AG04450 (cell line): ENCODE measurements at regions of chr9 and their contacts with region 1.

Region 1: DNA sequence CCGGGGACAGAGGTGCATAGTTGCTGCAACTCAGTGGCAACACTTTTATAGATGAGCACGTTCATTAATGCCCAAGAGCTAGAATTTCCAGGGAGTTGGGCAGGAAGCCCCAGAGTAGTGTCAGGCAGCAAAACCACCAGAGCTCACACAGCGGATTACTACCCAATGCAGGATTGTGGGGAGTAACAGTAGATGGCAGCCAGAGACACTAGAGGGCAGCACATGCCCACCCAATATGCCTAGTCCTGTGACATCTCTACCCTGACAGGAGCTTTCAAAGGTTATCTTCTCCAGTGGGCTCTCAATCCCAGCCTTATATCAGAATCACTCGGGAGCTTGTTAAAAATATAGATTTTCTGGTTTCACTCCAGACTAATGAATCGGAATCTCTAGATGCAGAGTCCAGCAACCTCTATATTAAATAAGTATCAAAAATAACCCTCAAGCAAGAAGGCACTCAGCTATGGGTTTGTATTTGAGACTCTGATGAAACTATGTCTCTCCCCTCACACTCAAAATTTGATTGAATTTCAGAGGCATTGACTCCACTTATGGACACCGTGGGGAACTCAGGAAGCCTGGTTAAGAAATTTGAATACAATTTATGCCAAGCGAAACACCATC is 58.4 kb upstream of the PHF24 start:
- DNase-seq: peak; percentile 33
- H3K4me3 ChIP-seq: no peak overlapping the region
- H3K27ac ChIP-seq: no peak overlapping the region
- H3K27me3 ChIP-seq: peaks cover 17% of the 10 kb centered on the region
- CTCF ChIP-seq: peak; percentile 91

Region 2: DNA sequence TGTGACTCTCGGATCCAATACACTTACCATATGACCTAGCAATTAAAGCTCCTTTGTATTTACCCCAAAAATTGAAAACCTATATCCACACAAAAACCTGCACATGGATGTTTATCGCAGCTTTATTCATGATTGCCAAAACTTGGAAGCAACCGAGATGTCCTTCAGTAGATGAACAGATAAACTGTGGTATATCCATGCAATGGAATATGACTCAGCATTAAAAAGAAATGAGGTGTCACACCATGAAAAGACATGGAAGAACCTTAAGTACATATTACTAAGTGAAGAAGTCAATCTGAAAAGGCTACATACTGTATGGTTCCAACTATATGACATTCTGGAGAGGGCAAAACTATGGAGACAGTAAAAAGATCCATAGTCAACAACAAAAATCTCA is 23.6 kb before region 1 on chr9:
- CTCF ChIA-PET with region 1: no interaction called
- POLR2A ChIA-PET with region 1: no interaction called
- DNase-seq: no peak
- H3K4me3 ChIP-seq: no peak overlapping the region
- H3K27ac ChIP-seq: no peak overlapping the region
- H3K27me3 ChIP-seq: no peaks in the 10 kb centered on the region
- CTCF ChIP-seq: no peak

Region 3: GRCh38 chr9:34989003-34989945 is 89.6 kb after region 1 on chr9 and contains the start of gene DNAJB5:
- CTCF ChIA-PET with region 1: interaction called, 71 read pairs
- POLR2A ChIA-PET with region 1: no interaction called
- DNase-seq: peak; percentile 99
- H3K4me3 ChIP-seq: peak within 1 kb of the TSS; percentile 87
- H3K27ac ChIP-seq: peak within 1 kb of the TSS; percentile 70
- H3K27me3 ChIP-seq: no peaks in the 10 kb centered on the region
- CTCF ChIP-seq: no peak
- polyA plus RNA-seq, gene DNAJB5: 5.1 and 9.5 TPM in 2 replicates

Region 4: GRCh38 chr9:35026671-35027070 is 127.0 kb after region 1 on chr9:
- CTCF ChIA-PET with region 1: interaction called, 13 read pairs
- POLR2A ChIA-PET with region 1: no interaction called
- DNase-seq: no peak
- H3K4me3 ChIP-seq: no peak overlapping the region
- H3K27ac ChIP-seq: peak overlapping the region; percentile 59
- H3K27me3 ChIP-seq: no peaks in the 10 kb centered on the region
- CTCF ChIP-seq: no peak

Region 5: GRCh38 chr9:35042081-35042604 is 142.5 kb after region 1 on chr9:
- CTCF ChIA-PET with region 1: interaction called, 14 read pairs
- POLR2A ChIA-PET with region 1: no interaction called
- DNase-seq: no peak
- H3K4me3 ChIP-seq: no peak overlapping the region
- H3K27ac ChIP-seq: no peak overlapping the region
- H3K27me3 ChIP-seq: no peaks in the 10 kb centered on the region
- CTCF ChIP-seq: no peak

Region 6: DNA sequence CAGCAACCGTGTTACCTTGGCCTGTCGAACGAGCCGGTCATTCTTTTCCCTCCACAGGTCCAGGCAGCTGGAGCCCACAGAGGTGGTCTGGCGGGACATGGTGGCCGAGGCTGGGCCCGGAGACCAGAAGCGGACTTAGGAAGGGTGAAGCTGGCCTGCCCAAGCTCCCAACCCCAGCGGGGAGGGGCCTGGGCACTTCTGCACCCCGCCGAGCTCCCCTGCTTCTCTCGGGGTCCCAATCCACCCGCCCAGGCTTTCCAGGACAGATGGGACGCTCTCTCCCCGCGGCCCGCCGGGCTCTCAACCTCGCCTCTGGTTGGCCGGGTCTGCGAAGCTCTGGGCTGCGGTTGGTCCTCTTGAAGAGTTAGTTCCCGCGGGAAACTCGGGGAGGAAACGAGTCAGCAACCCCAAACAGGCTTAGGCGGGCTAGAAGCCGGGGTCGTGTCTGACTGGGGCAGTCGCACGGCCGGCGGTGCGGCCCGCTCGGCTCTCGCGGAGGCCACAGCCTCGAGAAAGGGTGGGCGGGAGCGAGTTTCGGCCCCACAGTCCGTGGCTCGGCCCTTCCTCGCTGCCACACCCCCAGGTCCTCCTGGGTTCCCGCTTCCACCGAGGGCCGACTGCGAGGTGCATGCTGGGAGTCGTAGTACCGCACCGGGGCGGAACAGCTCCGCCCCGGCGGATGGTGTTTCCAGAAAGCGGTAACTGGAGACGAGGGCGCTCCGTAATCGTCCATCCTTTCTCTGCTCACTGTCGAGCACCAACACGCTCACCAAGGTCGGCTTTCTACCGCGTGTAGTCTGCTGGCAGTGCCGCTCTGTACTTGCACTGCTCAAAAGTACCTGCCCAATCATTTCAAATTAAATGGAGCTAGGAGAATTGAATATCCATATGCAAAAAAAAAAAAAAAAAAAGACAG is 180.0 kb after region 1 on chr9 and contains the start of gene FANCG:
- CTCF ChIA-PET with region 1: interaction called, 11 read pairs
- POLR2A ChIA-PET with region 1: no interaction called
- DNase-seq: peak; percentile 69
- H3K4me3 ChIP-seq: peak within 1 kb of the TSS; percentile 81
- H3K27ac ChIP-seq: peak within 1 kb of the TSS; percentile 47
- H3K27me3 ChIP-seq: no peaks in the 10 kb centered on the region
- CTCF ChIP-seq: no peak
- polyA plus RNA-seq, gene FANCG: 8.5 and 9.1 TPM in 2 replicates

Region 7: GRCh38 chr9:35258676-35259474 is 359.2 kb after region 1 on chr9:
- CTCF ChIA-PET with region 1: interaction called, 14 read pairs
- POLR2A ChIA-PET with region 1: no interaction called
- DNase-seq: peak; percentile 34
- H3K4me3 ChIP-seq: no peak overlapping the region
- H3K27ac ChIP-seq: no peak overlapping the region
- H3K27me3 ChIP-seq: no peaks in the 10 kb centered on the region
- CTCF ChIP-seq: peak; percentile 85

Region 8: DNA sequence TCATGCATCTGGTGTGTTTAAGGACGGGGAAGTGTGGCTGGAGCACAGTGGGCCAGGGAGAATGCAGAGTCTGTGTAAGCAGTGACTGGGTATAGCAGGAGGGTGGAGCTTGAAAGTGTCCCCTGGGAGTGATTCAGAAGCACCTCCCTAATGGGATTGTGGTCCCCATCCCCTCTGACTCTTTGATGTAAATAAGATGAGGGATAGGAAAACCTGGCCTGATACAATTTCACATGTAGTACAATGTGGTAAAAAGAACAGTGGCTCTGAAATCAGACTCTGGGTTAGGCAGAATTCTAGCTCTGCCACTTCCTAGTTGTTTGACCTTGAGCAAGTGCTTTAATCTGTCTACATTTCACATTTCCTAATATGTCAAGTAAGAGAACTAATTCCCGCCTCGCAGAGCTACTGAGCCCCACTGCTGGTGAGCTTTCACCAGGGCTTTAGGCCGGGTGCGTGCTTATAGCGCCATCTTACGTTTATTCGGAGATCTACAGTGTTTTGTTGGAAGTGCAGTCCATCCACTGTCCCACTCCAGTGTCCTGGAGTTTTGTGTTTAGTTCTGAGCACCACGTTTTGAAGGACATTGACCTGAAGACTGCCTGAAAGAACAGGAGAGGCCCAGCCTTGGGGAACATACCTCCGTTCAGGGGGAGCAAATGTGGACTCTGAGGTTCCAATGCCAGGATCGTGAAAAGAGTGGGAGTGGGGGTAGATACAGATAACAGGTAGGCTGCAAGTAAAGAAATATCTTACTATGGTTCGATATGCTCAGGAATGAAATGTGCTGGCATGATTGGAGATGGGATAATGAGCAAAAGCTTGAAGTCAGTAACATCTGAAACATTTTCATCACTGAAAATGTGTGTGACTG is 654.3 kb after region 1 on chr9:
- CTCF ChIA-PET with region 1: interaction called, 11 read pairs
- POLR2A ChIA-PET with region 1: no interaction called
- DNase-seq: peak; percentile 44
- H3K4me3 ChIP-seq: no peak overlapping the region
- H3K27ac ChIP-seq: no peak overlapping the region
- H3K27me3 ChIP-seq: no peaks in the 10 kb centered on the region
- CTCF ChIP-seq: peak; percentile 90